SK-N-SH (cell line): ENCODE measurements at regions of chr15 and their contacts with region 1.

Region 1: GRCh38 chr15:69058830-69059556 is 44.5 kb downstream of the NOX5 start:
- DNase-seq: peak; percentile 82
- H3K4me3 ChIP-seq: peak overlapping the region in 1 of 2 experiments; percentile 34; a peak in 1 of 4 replicates
- H3K27ac ChIP-seq: peak overlapping the region in 1 of 2 experiments; percentile 87; a peak in 2 of 4 replicates
- H3K4me1 ChIP-seq: peaks cover 4 to 26% of the 10 kb centered on the region in 2 experiments; a peak in 3 of 4 replicates
- H3K27me3 ChIP-seq: no peaks in the 10 kb centered on the region; the same call in 1 of the 2 replicates
- CTCF ChIP-seq: peak; percentile 92
- EP300 ChIP-seq: no peak
- RAD21 ChIP-seq: peak; percentile 96

Region 2: GRCh38 chr15:69039516-69040225 is 19.3 kb before region 1 on chr15:
- CTCF ChIA-PET with region 1: interaction called, 13 read pairs
- POLR2A ChIA-PET with region 1: no interaction called
- DNase-seq: no peak
- H3K4me3 ChIP-seq: no peak overlapping the region
- H3K27ac ChIP-seq: no peak overlapping the region
- H3K4me1 ChIP-seq: no peaks in the 10 kb centered on the region; a peak in 2 of 4 replicates
- H3K27me3 ChIP-seq: no peaks in the 10 kb centered on the region
- CTCF ChIP-seq: no peak
- EP300 ChIP-seq: no peak
- RAD21 ChIP-seq: no peak

Region 3: DNA sequence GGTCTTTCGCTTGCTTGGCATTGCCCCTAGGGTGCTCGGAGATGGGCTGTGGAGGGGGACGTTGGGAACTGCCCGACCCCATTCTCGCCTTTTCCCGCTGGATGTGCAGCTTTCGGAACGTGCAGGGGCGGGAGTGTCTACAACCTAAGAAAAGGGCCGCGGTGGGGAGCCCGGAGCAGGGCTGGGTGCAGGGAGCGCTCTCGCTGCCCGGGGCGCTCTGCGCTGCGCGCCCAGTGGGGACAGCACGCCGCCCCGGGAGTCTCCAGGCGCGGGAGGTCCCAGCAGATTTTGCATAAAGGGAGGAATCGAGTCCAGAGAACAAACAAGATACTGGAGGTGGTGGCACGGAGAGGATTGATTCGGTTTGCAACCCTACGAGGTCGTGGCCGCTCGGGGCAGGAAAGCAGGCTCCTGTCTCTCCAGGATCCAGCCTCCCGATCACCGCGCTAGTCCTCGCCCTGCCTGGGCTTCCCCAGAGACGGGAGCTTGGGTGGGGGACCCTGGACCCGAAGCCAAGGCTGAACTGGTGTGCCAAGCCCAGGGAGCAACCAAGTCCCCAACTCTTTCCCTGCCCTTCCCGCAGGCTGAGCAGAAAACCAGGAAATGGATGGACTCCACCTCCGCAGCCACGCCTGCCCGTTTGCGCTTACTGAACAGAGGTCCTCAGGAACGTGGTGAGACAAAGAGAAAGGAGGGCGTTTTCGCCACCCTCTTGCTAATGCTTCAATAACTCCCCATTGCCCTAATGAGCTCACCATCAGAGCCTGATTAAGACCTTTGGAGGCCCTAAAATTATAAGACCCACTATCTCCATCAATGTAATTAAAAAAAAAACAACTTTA is 15.2 kb after region 1 on chr15:
- CTCF ChIA-PET with region 1: interaction called, 31 read pairs
- POLR2A ChIA-PET with region 1: no interaction called
- DNase-seq: peak; percentile 82
- H3K4me3 ChIP-seq: peak overlapping the region; percentile 67 to 73
- H3K27ac ChIP-seq: peak overlapping the region in 1 of 2 experiments; percentile 88; a peak in 2 of 4 replicates
- H3K4me1 ChIP-seq: peaks cover 0 to 22% of the 10 kb centered on the region in 2 experiments; a peak in 3 of 4 replicates
- H3K27me3 ChIP-seq: no peaks in the 10 kb centered on the region
- CTCF ChIP-seq: peak; percentile 28; the same call in 1 of the 2 replicates
- EP300 ChIP-seq: no peak
- RAD21 ChIP-seq: no peak

Region 4: DNA sequence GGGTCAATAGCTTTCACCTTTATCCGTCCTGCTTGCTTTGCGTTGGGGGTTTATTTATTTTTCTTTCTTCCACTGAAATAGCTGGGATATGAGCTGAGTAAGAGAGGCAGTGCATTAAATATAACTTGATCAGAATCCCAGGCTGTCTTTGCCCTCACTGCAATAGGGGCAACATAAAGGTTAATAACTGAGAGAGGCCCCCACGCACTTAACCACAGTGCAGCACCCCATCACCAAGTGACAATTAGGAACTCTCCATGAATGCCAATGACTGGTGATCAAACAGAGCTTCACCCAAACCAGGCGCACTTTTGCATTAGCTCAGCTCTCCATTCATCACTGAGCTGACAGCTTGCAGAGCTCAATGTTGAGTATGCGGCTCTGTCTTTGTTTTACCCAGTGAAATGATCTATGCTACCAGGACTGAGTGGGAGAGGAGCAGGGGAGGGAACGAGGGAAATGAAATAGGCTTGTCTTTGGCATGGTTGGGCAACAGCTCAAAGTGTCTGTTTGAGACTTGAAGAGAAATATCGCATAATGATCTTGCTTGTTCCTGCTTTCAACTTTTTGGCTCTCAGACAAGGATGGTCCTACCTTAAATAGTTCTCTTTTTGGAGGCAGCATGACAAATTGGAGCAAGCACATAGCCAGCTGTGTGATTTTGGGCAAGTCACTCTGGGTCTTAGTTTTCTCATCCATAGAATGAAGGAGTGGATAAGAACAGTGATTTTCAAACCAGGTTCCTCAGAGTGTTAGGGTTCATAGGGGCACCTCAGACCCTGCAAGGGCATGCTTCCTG is 86.9 kb after region 1 on chr15:
- CTCF ChIA-PET with region 1: interaction called, 11 read pairs
- POLR2A ChIA-PET with region 1: no interaction called
- DNase-seq: peak; percentile 22
- H3K4me3 ChIP-seq: no peak overlapping the region
- H3K27ac ChIP-seq: no peak overlapping the region
- H3K4me1 ChIP-seq: peaks cover 3 to 9% of the 10 kb centered on the region in 2 experiments; a peak in 1 of 4 replicates
- H3K27me3 ChIP-seq: no peaks in the 10 kb centered on the region
- CTCF ChIP-seq: no peak
- EP300 ChIP-seq: no peak
- RAD21 ChIP-seq: no peak

Region 5: GRCh38 chr15:69225355-69226025 is 166.5 kb after region 1 on chr15:
- CTCF ChIA-PET with region 1: interaction called, 29 read pairs
- POLR2A ChIA-PET with region 1: no interaction called
- DNase-seq: peak; percentile 36
- H3K4me3 ChIP-seq: no peak overlapping the region
- H3K27ac ChIP-seq: no peak overlapping the region
- H3K4me1 ChIP-seq: peaks cover 3% of the 10 kb centered on the region in 2 experiments; a peak in 2 of 4 replicates
- H3K27me3 ChIP-seq: no peaks in the 10 kb centered on the region
- CTCF ChIP-seq: peak; percentile 59
- EP300 ChIP-seq: no peak
- RAD21 ChIP-seq: peak; percentile 77

Region 6: DNA sequence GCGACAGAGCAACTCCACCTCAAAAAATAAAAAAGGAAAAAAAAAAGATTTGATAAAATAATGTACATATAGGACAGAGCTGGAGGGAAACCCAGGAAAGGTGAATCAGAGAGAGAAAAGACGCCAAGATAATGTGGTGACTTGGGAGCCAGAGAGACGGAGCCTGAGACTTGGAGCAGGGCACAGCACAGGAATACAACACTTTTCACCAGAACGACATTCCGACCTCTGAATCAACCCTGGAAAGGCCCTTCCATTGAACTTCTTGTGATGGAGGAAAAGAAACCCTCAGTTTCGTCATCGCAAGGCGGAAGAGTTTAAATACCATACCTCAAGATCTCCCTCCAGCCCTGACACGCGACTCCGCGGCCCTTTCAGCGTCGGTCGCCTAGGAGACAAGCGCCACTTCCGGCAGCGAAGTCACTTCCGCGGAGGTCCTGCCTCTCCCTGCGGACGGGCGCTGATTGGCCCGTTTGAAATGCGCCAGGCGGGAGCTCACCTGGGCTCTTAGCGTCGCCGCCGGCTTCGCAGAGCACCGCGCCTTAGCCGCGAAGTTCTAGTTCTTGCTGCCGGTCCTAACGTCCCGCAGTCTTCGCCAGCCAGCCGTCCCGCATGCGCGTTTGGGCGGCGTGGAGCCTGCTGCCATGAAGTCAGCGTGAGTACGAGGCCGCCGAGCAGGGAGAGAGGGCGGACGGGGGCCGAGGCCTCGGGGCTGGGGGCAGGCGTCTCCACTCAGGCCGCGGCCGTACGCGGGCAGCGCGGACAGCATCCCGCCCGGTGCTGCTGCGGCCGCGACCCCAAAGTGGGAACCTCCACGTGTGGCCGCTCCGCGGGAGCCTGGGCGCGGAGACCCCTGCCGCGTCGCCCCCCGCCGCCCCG is 355.1 kb after region 1 on chr15 and contains the start of gene KIF23:
- CTCF ChIA-PET with region 1: interaction called, 24 read pairs
- POLR2A ChIA-PET with region 1: no interaction called
- DNase-seq: peak; percentile 95
- H3K4me3 ChIP-seq: peak within 1 kb of the TSS; percentile 82 to 95
- H3K27ac ChIP-seq: peak within 1 kb of the TSS; percentile 85 to 86
- H3K4me1 ChIP-seq: peaks cover 10 to 22% of the 10 kb centered on the region in 2 experiments; a peak in 3 of 4 replicates
- H3K27me3 ChIP-seq: no peaks in the 10 kb centered on the region
- CTCF ChIP-seq: no peak
- EP300 ChIP-seq: no peak
- RAD21 ChIP-seq: no peak
- polyA plus RNA-seq, gene KIF23: 23.3 and 25.8 TPM in 2 replicates